ENCODE measurements at regions of chr4 and their contacts with region 1.

Region 1: GRCh38 chr4:26860157-26860921 is at the start of gene STIM2:
- DNase-seq: peak; percentile 95 to 100 (median 98)
- ATAC-seq: peak; percentile 62
- H3K4me3 Mint-ChIP-seq: peak within 1 kb of the TSS; percentile 96 to 100 (median 99)
- H3K27ac Mint-ChIP-seq: peak within 1 kb of the TSS; percentile 97 to 99 (median 99)
- H3K4me1 Mint-ChIP-seq: peaks cover 30 to 75% (median 65%) of the 10 kb centered on the region in 4 donors
- H3K27me3 Mint-ChIP-seq: no peaks in the 10 kb centered on the region
- polyA plus RNA-seq, gene STIM2: 22.2 to 35.4 (median 33.0) TPM

Region 2: GRCh38 chr4:26583865-26584652 is 276.3 kb before region 1 on chr4 and contains the start of gene TBC1D19:
- POLR2A ChIA-PET with region 1: interaction called, 16 read pairs
- DNase-seq: peak; percentile 68 to 92 (median 89)
- ATAC-seq: peak; percentile 85 to 92
- H3K4me3 Mint-ChIP-seq: peak within 1 kb of the TSS; percentile 90 to 98 (median 95)
- H3K27ac Mint-ChIP-seq: peak within 1 kb of the TSS; percentile 95 to 99 (median 98)
- H3K4me1 Mint-ChIP-seq: peaks cover 9 to 29% (median 27%) of the 10 kb centered on the region in 4 donors
- H3K27me3 Mint-ChIP-seq: peaks cover 1 to 10% (median 2%) of the 10 kb centered on the region in 5 donors
- polyA plus RNA-seq, gene TBC1D19: 2.2 to 4.1 (median 2.5) TPM

Region 3: GRCh38 chr4:26873391-26874026 is 13.2 kb after region 1 on chr4:
- POLR2A ChIA-PET with region 1: interaction called, 27 read pairs
- DNase-seq: peak in 9 of 10 donors; percentile 29 to 78 (median 65)
- ATAC-seq: peak; percentile 84 to 92
- H3K4me3 Mint-ChIP-seq: peak overlapping the region; percentile 46 to 86 (median 72)
- H3K27ac Mint-ChIP-seq: peak overlapping the region; percentile 86 to 95 (median 93)
- H3K4me1 Mint-ChIP-seq: peaks cover 36 to 90% (median 79%) of the 10 kb centered on the region in 4 donors
- H3K27me3 Mint-ChIP-seq: no peaks in the 10 kb centered on the region

Region 4: DNA sequence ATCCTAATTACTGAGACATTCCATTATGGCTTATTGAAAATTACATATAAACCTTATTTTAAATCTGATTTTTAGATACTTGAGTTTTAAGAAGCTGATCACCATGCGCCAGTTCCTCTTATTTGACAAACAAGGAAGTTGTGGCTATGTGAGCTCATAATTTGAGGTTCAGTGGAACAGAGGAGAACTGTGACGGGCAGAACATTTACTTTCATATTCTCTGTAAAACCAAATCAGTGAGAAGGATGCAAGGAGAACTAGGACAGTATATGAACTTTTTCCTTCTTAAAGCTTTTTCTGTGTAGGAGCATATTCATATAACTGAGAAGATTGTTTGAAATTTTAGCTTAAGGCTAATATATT is 25.6 kb after region 1 on chr4:
- POLR2A ChIA-PET with region 1: interaction called, 180 read pairs
- DNase-seq: peak in 8 of 10 donors; percentile 20 to 81 (median 64)
- ATAC-seq: peak; percentile 69 to 73
- H3K4me3 Mint-ChIP-seq: peak overlapping the region; percentile 66 to 87 (median 84)
- H3K27ac Mint-ChIP-seq: peak overlapping the region; percentile 95 to 98 (median 97)
- H3K4me1 Mint-ChIP-seq: peaks cover 27 to 94% (median 73%) of the 10 kb centered on the region in 4 donors
- H3K27me3 Mint-ChIP-seq: no peaks in the 10 kb centered on the region

Region 5: GRCh38 chr4:26916195-26916594 is 55.9 kb after region 1 on chr4:
- POLR2A ChIA-PET with region 1: interaction called, 10 read pairs
- DNase-seq: peak in 1 of 10 donors; percentile 13
- ATAC-seq: peak; percentile 49 to 52
- H3K4me3 Mint-ChIP-seq: peak overlapping the region in 4 of 10 donors; percentile 12 to 47 (median 28)
- H3K27ac Mint-ChIP-seq: peak overlapping the region in 9 of 10 donors; percentile 45 to 77 (median 65)
- H3K4me1 Mint-ChIP-seq: peaks cover 30 to 73% (median 66%) of the 10 kb centered on the region in 4 donors
- H3K27me3 Mint-ChIP-seq: no peaks in the 10 kb centered on the region

Region 6: GRCh38 chr4:26992657-26993361 is 132.5 kb after region 1 on chr4:
- POLR2A ChIA-PET with region 1: interaction called, 21 read pairs
- DNase-seq: no peak
- ATAC-seq: peak; percentile 63
- H3K4me3 Mint-ChIP-seq: no peak overlapping the region
- H3K27ac Mint-ChIP-seq: no peak overlapping the region
- H3K4me1 Mint-ChIP-seq: peaks cover 9 to 28% (median 26%) of the 10 kb centered on the region in 4 donors
- H3K27me3 Mint-ChIP-seq: no peaks in the 10 kb centered on the region

Measured in naive thymus-derived CD8-positive, alpha-beta T cell (primary cell).